Mammary epithelial cell (primary cell): ENCODE measurements at regions of chr16 and their contacts with region 1.

Region 1: GRCh38 chr16:3400779-3401688 is at the starts of genes ZNF174 and ZSCAN32:
- DNase-seq: peak; percentile 99
- H3K4me3 ChIP-seq: peak within 1 kb of the TSS; percentile 61 to 88 (median 79)
- H3K27ac ChIP-seq: peak within 1 kb of the TSS; percentile 60
- H3K4me1 ChIP-seq: peaks cover 14% of the 10 kb centered on the region
- H3K27me3 ChIP-seq: no peaks in the 10 kb centered on the region
- CTCF ChIP-seq: peak in 1 of 2 donors; percentile 6
- total RNA-seq, gene ZNF174: 5.3 to 7.7 TPM
- total RNA-seq, gene ZSCAN32: 13.1 to 15.8 TPM

Region 2: DNA sequence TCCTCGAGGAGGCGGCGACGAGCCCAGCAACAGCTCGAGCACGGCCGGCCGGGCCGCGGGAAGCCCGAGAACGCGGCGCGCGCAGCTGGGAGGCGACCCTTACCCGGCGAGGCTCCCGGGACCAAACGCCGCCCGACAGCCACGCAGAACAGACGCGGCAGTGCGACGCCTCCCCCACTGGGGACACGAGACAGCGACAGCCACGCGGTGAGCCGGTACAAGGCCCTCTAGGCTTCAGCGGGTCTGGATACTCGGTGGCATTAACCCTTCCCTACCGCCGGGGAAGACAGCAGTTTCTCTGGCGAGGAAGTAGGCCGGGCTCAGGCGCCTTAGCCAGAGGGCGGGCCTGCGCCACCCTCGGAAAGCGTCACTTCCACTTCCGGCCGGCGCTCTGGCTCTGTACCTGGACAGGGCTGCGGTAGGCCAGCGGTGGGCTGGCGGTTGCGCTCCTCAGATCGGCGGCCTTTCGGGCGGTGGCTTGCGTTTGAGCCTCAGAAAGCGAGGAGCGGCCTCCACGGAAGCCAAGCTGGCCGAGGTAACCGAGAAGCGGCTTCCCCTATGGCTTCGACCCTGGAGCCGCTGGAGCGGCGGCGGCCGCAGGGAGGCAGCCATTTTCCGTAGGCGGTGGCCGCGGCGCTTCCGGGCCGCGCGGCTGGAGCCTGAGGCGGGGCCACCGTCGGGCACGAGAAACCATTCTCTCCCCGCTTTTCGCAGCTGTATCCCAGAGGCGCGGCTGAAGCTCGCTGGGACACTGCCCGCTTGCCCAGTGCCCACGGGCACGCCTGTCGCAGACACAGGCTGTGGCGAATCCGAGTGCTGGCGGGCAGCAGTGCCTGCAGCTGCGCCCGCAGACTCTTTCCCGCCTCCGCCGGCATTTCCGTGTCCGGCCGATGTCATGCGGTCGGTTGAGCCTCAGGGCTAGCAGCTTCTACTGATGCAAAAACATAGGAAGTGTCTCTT is 95.6 kb before region 1 on chr16 and contains the starts of genes TIGD7 and ZNF75A:
- CTCF ChIA-PET with region 1: no interaction called
- dilution Hi-C with region 1: no loop called
- in situ Hi-C with region 1: loop called (anchors 10 to 25 kb)
- intact Hi-C with region 1: loop called (anchors 5 kb)
- DNase-seq: peak; percentile 87
- H3K4me3 ChIP-seq: peak within 1 kb of the TSS; percentile 60 to 67 (median 62)
- H3K27ac ChIP-seq: peak within 1 kb of the TSS; percentile 45
- H3K4me1 ChIP-seq: peaks cover 6% of the 10 kb centered on the region
- H3K27me3 ChIP-seq: no peaks in the 10 kb centered on the region
- CTCF ChIP-seq: peak in 1 of 2 donors; percentile 17
- total RNA-seq, gene TIGD7: 1.9 to 2.3 TPM
- total RNA-seq, gene ZNF75A: 13.7 to 24.6 TPM

Region 3: DNA sequence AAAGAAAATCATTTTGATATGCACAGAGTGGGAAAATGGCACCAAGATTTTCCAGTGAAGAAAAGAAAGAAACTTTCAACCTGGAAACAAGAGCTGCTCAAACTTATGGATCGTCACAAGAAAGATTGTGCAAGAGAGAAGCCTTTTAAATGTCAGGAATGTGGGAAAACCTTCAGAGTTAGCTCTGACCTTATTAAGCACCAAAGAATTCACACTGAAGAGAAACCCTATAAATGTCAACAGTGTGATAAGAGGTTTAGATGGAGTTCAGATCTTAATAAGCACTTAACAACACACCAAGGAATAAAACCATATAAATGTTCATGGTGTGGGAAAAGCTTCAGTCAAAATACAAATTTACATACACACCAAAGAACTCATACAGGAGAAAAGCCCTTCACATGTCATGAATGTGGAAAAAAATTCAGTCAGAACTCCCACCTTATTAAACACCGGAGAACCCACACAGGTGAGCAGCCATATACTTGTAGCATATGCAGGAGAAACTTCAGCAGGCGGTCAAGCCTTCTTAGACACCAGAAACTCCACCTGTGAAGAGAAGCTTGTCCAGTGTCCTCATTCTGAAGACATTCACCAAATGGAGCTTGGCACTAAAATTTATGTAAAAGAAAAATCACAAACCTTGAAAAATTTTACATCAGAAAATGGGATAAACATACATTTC is 83.6 kb before region 1 on chr16:
- CTCF ChIA-PET with region 1: no interaction called
- dilution Hi-C with region 1: no loop called
- in situ Hi-C with region 1: loop called (anchors 10 to 25 kb)
- intact Hi-C with region 1: no loop called
- DNase-seq: no peak
- H3K4me3 ChIP-seq: no peak overlapping the region
- H3K27ac ChIP-seq: no peak overlapping the region
- H3K4me1 ChIP-seq: no peaks in the 10 kb centered on the region
- H3K27me3 ChIP-seq: no peaks in the 10 kb centered on the region
- CTCF ChIP-seq: no peak

Region 4: GRCh38 chr16:3439637-3440036 is 38.6 kb after region 1 on chr16:
- CTCF ChIA-PET with region 1: no interaction called
- dilution Hi-C with region 1: loop called (anchors 5 kb)
- in situ Hi-C with region 1: no loop called
- intact Hi-C with region 1: no loop called
- DNase-seq: no peak
- H3K4me3 ChIP-seq: no peak overlapping the region
- H3K27ac ChIP-seq: no peak overlapping the region
- H3K4me1 ChIP-seq: peaks cover 3% of the 10 kb centered on the region
- H3K27me3 ChIP-seq: no peaks in the 10 kb centered on the region
- CTCF ChIP-seq: no peak

Region 5: GRCh38 chr16:3490911-3491629 is 90.0 kb after region 1 on chr16:
- CTCF ChIA-PET with region 1: no interaction called
- dilution Hi-C with region 1: no loop called
- in situ Hi-C with region 1: no loop called
- intact Hi-C with region 1: no loop called
- DNase-seq: no peak
- H3K4me3 ChIP-seq: no peak overlapping the region
- H3K27ac ChIP-seq: no peak overlapping the region
- H3K4me1 ChIP-seq: no peaks in the 10 kb centered on the region
- H3K27me3 ChIP-seq: no peaks in the 10 kb centered on the region
- CTCF ChIP-seq: no peak

Region 6: DNA sequence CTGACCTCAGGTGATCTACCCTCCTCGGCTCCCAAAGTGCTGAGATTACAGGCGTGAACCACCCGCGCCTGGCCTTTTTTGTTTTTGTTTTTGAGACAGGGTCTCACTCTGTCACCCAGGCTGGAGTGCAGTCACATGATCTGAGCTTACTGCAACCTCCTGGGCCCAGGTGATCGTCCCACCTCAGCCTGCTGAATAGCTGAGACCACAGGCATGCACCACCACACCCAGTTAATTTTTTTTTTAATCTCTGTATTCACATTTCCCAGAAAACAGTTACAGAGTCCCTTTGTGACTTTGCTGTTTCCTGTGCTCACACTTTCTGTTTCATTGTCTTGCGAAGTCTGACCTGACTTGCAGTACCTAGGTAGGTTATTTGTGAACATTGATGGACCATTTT is 102.5 kb after region 1 on chr16:
- CTCF ChIA-PET with region 1: no interaction called
- dilution Hi-C with region 1: no loop called
- in situ Hi-C with region 1: no loop called
- intact Hi-C with region 1: loop called (anchors 2 kb)
- DNase-seq: peak; percentile 62
- H3K4me3 ChIP-seq: no peak overlapping the region
- H3K27ac ChIP-seq: peak overlapping the region; percentile 65
- H3K4me1 ChIP-seq: peaks cover 18% of the 10 kb centered on the region
- H3K27me3 ChIP-seq: no peaks in the 10 kb centered on the region
- CTCF ChIP-seq: no peak